Mammary epithelial cell (primary cell): ENCODE measurements at regions of chr22 and their contacts with region 1.

Region 1: DNA sequence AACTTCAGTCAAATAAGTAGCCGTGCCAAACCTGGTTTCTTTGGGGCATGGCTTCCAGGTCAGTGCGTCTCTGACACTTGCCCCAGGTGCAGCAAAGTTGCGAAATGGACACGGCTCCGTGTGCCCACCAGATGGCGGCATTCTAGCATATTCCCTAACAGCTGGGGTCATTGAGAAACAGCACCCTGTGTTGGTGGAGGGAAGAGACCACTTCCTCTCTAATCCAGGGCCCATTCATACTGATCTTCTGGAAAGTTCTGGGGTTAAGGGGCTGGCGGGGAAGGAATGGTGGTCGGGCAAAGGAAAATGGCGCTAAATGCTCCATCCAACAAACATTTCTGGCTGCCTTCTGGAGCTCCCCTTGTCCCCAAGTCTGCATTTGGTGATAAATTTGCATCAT is 141.2 kb upstream of the TIMP3 start:
- DNase-seq: peak; percentile 62
- H3K4me3 ChIP-seq: no peak overlapping the region
- H3K27ac ChIP-seq: no peak overlapping the region
- H3K4me1 ChIP-seq: peaks cover 24% of the 10 kb centered on the region
- H3K27me3 ChIP-seq: no peaks in the 10 kb centered on the region
- CTCF ChIP-seq: peak; percentile 72 to 86

Region 2: DNA sequence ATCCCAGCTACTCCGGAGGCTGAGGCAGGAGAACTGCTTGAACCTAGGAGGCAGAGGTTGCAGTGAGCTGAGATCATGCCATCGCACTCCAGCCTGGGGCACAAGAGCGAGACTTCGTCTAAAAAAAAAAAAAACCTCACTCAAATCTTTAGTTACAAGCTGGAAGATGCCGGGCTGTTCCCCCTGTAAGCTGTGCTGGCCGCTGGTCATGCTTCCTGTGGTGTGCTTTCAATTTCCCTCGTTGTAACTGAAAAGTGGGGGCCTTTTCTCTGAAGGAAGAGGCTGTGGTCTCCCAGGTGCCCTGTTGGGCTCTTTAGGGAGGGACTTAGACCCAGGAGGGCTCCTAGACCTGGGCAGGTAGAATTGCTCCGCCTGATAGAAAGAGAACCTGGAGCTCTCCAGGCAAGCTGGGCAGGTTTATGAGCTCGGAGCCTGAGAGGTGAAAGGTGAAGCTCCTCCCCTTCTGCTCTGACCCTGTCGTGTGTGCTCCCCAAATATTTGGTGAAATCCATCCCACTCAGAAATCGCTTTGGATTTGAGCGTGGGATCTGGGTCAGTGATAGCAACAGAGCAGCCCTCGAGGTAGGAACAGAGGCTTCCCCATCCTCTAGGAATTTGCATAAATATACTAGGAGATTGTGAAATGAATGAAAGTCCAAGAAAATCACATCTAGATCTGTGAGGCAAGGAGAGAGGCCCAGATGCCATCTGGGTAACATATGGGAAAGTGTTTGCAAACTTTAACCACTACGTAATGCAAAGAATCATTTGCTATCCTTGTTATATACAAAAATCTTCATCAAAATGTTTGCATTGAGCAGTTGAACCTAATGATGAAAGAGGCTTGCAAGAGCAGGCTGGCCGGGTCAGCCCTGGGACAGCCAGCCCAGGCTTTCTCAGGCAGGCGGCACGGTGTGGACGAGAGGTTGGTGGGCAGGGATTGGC is 31.4 kb before region 1 on chr22:
- CTCF ChIA-PET with region 1: no interaction called
- dilution Hi-C with region 1: no loop called
- in situ Hi-C with region 1: no loop called
- intact Hi-C with region 1: loop called (anchors 1 kb)
- DNase-seq: no peak
- H3K4me3 ChIP-seq: no peak overlapping the region
- H3K27ac ChIP-seq: no peak overlapping the region
- H3K4me1 ChIP-seq: no peaks in the 10 kb centered on the region
- H3K27me3 ChIP-seq: no peaks in the 10 kb centered on the region
- CTCF ChIP-seq: no peak

Region 3: GRCh38 chr22:32745251-32745995 is 85.1 kb after region 1 on chr22:
- CTCF ChIA-PET with region 1: no interaction called
- dilution Hi-C with region 1: no loop called
- in situ Hi-C with region 1: no loop called
- intact Hi-C with region 1: loop called (anchors 10 kb)
- DNase-seq: peak; percentile 73
- H3K4me3 ChIP-seq: no peak overlapping the region
- H3K27ac ChIP-seq: peak overlapping the region; percentile 23
- H3K4me1 ChIP-seq: peaks cover 14% of the 10 kb centered on the region
- H3K27me3 ChIP-seq: no peaks in the 10 kb centered on the region
- CTCF ChIP-seq: no peak

Region 4: GRCh38 chr22:32796865-32797573 is 136.7 kb after region 1 on chr22:
- CTCF ChIA-PET with region 1: interaction called, 46 read pairs
- dilution Hi-C with region 1: no loop called
- in situ Hi-C with region 1: loop called (anchors 5 kb)
- intact Hi-C with region 1: loop called (anchors 1 kb)
- DNase-seq: peak; percentile 48
- H3K4me3 ChIP-seq: peak overlapping the region in 1 of 3 experiments; percentile 3
- H3K27ac ChIP-seq: no peak overlapping the region
- H3K4me1 ChIP-seq: peaks cover 11% of the 10 kb centered on the region
- H3K27me3 ChIP-seq: no peaks in the 10 kb centered on the region
- CTCF ChIP-seq: peak; percentile 96

Region 5: GRCh38 chr22:32823024-32823730 is 162.9 kb after region 1 on chr22:
- CTCF ChIA-PET with region 1: no interaction called
- dilution Hi-C with region 1: no loop called
- in situ Hi-C with region 1: no loop called
- intact Hi-C with region 1: loop called (anchors 1 kb)
- DNase-seq: no peak
- H3K4me3 ChIP-seq: no peak overlapping the region
- H3K27ac ChIP-seq: no peak overlapping the region
- H3K4me1 ChIP-seq: peaks cover 29% of the 10 kb centered on the region
- H3K27me3 ChIP-seq: no peaks in the 10 kb centered on the region
- CTCF ChIP-seq: peak; percentile 40 to 44

Region 6: DNA sequence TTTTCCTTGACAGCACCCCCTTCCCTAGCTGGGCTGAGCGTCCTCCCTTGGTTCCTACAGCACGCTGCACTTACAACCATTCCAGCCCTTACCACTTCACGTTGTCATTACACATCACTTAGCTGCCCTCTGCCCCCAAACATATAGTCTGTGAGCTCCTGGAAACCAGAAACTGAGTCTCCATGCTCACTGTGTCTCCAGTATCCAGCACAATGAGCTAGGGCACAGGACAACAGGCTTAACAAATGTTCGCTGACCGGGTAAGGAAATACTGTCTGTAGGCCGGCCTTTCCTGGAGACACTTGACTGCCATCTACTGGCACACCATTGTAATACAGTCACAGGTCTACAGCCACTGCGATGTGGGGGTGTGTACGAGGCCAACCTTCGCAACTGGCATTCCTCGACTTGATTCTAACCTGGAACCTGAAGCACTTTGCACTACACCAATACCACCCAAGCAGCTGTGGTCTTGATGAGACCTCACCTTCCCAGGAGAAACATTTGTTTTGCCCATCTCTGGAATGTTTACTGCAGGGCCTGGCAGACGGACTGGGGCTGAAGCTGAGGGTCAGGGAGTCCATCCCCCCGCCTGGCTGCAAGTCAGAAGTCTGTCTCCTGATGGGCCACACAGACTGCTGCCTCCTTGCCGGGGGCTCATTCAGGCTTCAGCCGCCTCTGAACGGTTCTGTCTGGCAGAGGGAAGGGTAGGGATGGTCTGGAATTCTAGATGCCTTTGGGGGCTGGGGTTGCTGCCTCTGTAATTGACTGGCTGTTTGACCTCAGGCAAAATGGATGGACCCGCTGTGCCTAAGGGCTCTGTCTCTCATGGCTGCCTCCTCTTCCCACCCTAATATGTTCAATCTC is 325.8 kb after region 1 on chr22:
- CTCF ChIA-PET with region 1: no interaction called
- dilution Hi-C with region 1: no loop called
- in situ Hi-C with region 1: loop called (anchors 25 kb)
- intact Hi-C with region 1: loop called (anchors 2 kb)
- DNase-seq: peak; percentile 75
- H3K4me3 ChIP-seq: no peak overlapping the region
- H3K27ac ChIP-seq: peak overlapping the region; percentile 80
- H3K4me1 ChIP-seq: peaks cover 34% of the 10 kb centered on the region
- H3K27me3 ChIP-seq: no peaks in the 10 kb centered on the region
- CTCF ChIP-seq: peak; percentile 86 to 92